Heart left ventricle (tissue), 16 donors: ENCODE measurements at regions of chr4 and their contacts with region 1.

Region 1: GRCh38 chr4:170027181-170027829 is 1.1 kb upstream of the MFAP3L start:
- DNase-seq: peak; percentile 95 to 97 (median 95)
- ATAC-seq: peak; percentile 93 to 97 (median 94)
- H3K4me3 ChIP-seq: peak overlapping the region; percentile 75 to 99 (median 92)
- H3K27ac ChIP-seq: peak overlapping the region in 10 of 12 donors; percentile 85 to 93 (median 89)
- H3K4me1 ChIP-seq: peaks cover 0 to 15% (median 5%) of the 10 kb centered on the region in 12 donors
- H3K27me3 ChIP-seq: peaks cover 0 to 26% (median 0%) of the 10 kb centered on the region in 9 donors
- CTCF ChIP-seq: no peak
- POLR2A ChIP-seq: peak in 1 of 2 donors; percentile 15

Region 2: DNA sequence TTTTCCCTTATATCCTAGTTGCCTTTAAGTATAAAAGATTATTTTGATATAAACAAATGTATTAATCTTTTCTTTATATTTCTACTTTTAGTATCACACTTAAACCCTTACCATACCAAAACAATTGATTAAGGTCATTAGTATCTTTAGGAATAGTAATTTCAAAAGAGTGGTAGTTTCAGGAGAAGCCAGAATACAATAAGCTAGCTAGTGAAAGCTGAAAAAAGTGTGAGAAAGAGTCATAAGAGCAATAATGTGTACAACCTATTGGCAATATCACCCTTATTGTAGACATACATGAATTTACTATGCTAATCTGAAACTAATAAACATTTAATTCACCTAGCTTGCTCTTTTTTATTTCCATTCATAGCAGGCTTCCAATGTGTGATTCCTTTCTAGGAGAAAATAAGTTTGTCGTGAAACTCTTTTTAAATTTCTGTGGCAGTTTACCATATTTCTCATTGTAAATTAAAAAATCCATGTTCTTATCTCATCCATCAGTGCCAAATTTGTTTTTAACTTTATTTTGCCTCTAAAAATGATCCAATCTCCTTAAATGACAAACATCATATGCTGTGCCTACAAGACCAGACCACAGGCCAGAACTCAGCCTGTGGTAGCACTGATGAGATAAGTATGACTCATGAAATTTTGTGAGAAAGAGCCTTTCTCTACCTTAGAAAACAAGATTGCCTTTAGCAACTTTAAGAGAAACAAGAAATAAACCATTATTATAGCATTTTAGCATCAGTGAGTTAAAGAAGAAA is 423.0 kb before region 1 on chr4:
- intact Hi-C with region 1: loop called in 1 of 10 experiments (anchors 10 kb)
- DNase-seq: no peak
- ATAC-seq: peak in 3 of 4 donors; percentile 52 to 77 (median 60)
- H3K4me3 ChIP-seq: no peak overlapping the region
- H3K27ac ChIP-seq: peak overlapping the region in 1 of 12 donors; percentile 11
- H3K4me1 ChIP-seq: peaks cover 0 to 20% (median 3%) of the 10 kb centered on the region in 12 donors
- H3K27me3 ChIP-seq: no peaks in the 10 kb centered on the region
- CTCF ChIP-seq: no peak
- POLR2A ChIP-seq: no peak

Region 3: GRCh38 chr4:169757575-169758184 is 269.6 kb before region 1 on chr4 and contains the start of gene HPF1:
- intact Hi-C with region 1: loop called in 1 of 10 experiments (anchors 5 kb)
- DNase-seq: peak; percentile 91 to 97 (median 93)
- ATAC-seq: peak; percentile 91 to 99 (median 98)
- H3K4me3 ChIP-seq: peak within 1 kb of the TSS; percentile 49 to 92 (median 89)
- H3K27ac ChIP-seq: peak within 1 kb of the TSS in 11 of 12 donors; percentile 32 to 84 (median 64)
- H3K4me1 ChIP-seq: peaks cover 4 to 26% (median 15%) of the 10 kb centered on the region in 12 donors
- H3K27me3 ChIP-seq: no peaks in the 10 kb centered on the region
- CTCF ChIP-seq: peak in 1 of 12 donors; percentile 27
- POLR2A ChIP-seq: peak in 1 of 2 donors; percentile 57
- total RNA-seq, gene HPF1: 15.7 to 38.3 (median 20.3) TPM

Region 4: GRCh38 chr4:170089668-170090351 is 62.5 kb after region 1 on chr4 and contains the start of gene AADAT:
- intact Hi-C with region 1: loop called in 1 of 10 experiments (anchors 2 kb)
- DNase-seq: peak; percentile 75 to 85 (median 82)
- ATAC-seq: peak; percentile 86 to 99 (median 98)
- H3K4me3 ChIP-seq: peak within 1 kb of the TSS; percentile 40 to 80 (median 62)
- H3K27ac ChIP-seq: peak within 1 kb of the TSS in 10 of 12 donors; percentile 42 to 69 (median 64)
- H3K4me1 ChIP-seq: peaks cover 0 to 14% (median 3%) of the 10 kb centered on the region in 12 donors
- H3K27me3 ChIP-seq: peaks cover 0 to 19% (median 0%) of the 10 kb centered on the region in 9 donors
- CTCF ChIP-seq: peak; percentile 51 to 79 (median 66)
- POLR2A ChIP-seq: no peak
- total RNA-seq, gene AADAT: 0.53 to 3.3 (median 1.5) TPM